Body of pancreas (tissue), 4 donors: ENCODE measurements at regions of chr22 and their contacts with region 1.

Region 1: DNA sequence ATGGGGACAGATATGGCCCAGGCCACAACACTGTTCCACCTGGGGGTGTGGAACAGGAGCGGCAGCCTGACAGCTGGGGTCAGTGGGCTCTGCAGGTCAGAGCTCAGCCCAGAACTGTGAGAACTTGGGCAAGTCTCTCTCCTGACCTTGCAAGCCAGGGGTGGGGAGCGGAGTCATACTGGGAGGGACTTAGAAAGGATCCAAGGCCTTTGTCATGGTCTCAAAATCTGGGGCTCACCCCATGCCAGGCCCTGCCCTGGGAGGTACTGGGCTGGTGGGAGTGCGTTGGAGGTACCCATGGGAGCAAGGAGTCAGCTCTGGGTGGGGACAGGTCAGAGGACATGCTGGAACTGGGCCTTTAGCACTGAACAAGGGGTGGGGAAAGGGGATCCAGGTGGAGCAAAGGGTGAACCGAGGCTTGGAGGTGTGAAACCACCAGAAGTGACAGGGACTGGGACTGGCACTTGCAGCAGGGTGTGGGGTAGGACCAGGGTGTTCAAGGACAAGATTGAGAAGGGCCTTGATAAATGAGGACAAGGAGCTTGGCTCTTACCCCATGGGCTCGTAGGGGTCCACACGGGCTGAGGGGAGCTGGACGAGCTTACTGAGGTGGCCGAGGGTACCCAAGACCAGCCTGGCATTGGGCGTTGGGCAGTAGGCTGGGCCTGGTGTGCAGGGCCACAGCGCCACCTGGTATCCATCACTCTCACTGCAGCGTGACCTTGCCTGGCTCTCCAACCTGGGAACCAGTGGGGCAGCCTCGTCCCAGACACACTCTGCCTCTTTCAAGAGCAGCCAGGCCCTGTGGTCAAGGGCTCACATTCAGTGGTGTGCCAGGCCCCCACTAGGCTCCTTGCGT is 7.4 kb upstream of the PMM1 start:
- DNase-seq: peak; percentile 78 to 84 (median 80)
- ATAC-seq: peak; percentile 98
- H3K4me3 ChIP-seq: no peak overlapping the region
- H3K27ac ChIP-seq: peak overlapping the region in 3 of 4 donors; percentile 1 to 36 (median 11)
- H3K4me1 ChIP-seq: peaks cover 8% of the 10 kb centered on the region
- H3K27me3 ChIP-seq: no peaks in the 10 kb centered on the region
- CTCF ChIP-seq: peak; percentile 67 to 95 (median 91)
- POLR2A ChIP-seq: no peak

Region 2: GRCh38 chr22:41551877-41552582 is 45.0 kb before region 1 on chr22:
- intact Hi-C with region 1: loop called (anchors 5 kb)
- DNase-seq: no peak
- ATAC-seq: no peak
- H3K4me3 ChIP-seq: no peak overlapping the region
- H3K27ac ChIP-seq: no peak overlapping the region
- H3K4me1 ChIP-seq: peaks cover 10% of the 10 kb centered on the region
- H3K27me3 ChIP-seq: no peaks in the 10 kb centered on the region
- CTCF ChIP-seq: no peak
- POLR2A ChIP-seq: no peak

Region 3: DNA sequence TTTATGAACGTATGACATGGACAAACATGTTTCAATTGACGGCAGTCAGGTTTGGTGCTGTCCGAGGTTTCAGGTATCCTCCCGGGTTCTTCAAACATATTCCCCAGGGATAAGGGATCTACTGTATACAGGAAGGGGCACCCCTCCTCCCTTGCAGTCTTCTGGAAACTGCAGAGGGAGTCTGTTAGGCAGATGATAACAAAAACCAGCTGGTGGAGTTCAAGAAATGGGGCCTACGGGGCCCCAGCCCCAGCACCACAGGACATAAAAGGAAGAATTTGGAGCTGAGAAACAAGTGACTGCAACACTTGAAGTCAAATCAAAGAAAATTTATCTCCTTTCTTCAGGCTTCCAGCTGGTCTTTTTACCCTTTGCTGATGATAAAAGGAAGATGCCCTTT is 59.6 kb after region 1 on chr22:
- intact Hi-C with region 1: no loop called
- DNase-seq: no peak
- ATAC-seq: no peak
- H3K4me3 ChIP-seq: no peak overlapping the region
- H3K27ac ChIP-seq: no peak overlapping the region
- H3K4me1 ChIP-seq: no peaks in the 10 kb centered on the region
- H3K27me3 ChIP-seq: no peaks in the 10 kb centered on the region
- CTCF ChIP-seq: no peak
- POLR2A ChIP-seq: no peak